CD4-positive, alpha-beta memory T cell (primary cell): ENCODE measurements at regions of chr1 and their contacts with region 1.

Region 1: GRCh38 chr1:24536391-24536840 is 19.5 kb upstream of the NCMAP start:
- DNase-seq: peak; percentile 83 to 93 (median 86)
- H3K4me3 ChIP-seq: peak overlapping the region in 1 of 2 donors; percentile 32
- H3K4me3 Mint-ChIP-seq: peak overlapping the region; percentile 76 to 92 (median 88)
- H3K27ac ChIP-seq: peak overlapping the region; percentile 88
- H3K27ac Mint-ChIP-seq: peak overlapping the region; percentile 98 to 100 (median 100)
- H3K4me1 ChIP-seq: peaks cover 83% of the 10 kb centered on the region
- H3K4me1 Mint-ChIP-seq: peaks cover 57 to 82% (median 68%) of the 10 kb centered on the region in 4 donors
- H3K27me3 ChIP-seq: no peaks in the 10 kb centered on the region
- H3K27me3 Mint-ChIP-seq: no peaks in the 10 kb centered on the region

Region 2: GRCh38 chr1:24186993-24187805 is 349.2 kb before region 1 on chr1 and contains the start of gene IFNLR1:
- CTCF ChIA-PET with region 1: no interaction called
- POLR2A ChIA-PET with region 1: no interaction called
- intact Hi-C with region 1: loop called (anchors 5 kb)
- DNase-seq: peak; percentile 42 to 75 (median 57)
- H3K4me3 ChIP-seq: peak within 1 kb of the TSS; percentile 11 to 60
- H3K4me3 Mint-ChIP-seq: peak within 1 kb of the TSS; percentile 86 to 92 (median 90)
- H3K27ac ChIP-seq: peak within 1 kb of the TSS; percentile 50
- H3K27ac Mint-ChIP-seq: peak within 1 kb of the TSS; percentile 53 to 93 (median 83)
- H3K4me1 ChIP-seq: peaks cover 27% of the 10 kb centered on the region
- H3K4me1 Mint-ChIP-seq: peaks cover 20 to 40% (median 34%) of the 10 kb centered on the region in 4 donors
- H3K27me3 ChIP-seq: no peaks in the 10 kb centered on the region
- H3K27me3 Mint-ChIP-seq: no peaks in the 10 kb centered on the region
- total RNA-seq, gene IFNLR1: 3.0 to 4.5 TPM

Region 3: GRCh38 chr1:24228311-24228710 is 308.1 kb before region 1 on chr1:
- CTCF ChIA-PET with region 1: no interaction called
- POLR2A ChIA-PET with region 1: no interaction called
- intact Hi-C with region 1: no loop called
- DNase-seq: no peak
- H3K4me3 ChIP-seq: no peak overlapping the region
- H3K4me3 Mint-ChIP-seq: peak overlapping the region in 4 of 8 donors; percentile 27 to 52 (median 40)
- H3K27ac ChIP-seq: no peak overlapping the region
- H3K27ac Mint-ChIP-seq: no peak overlapping the region
- H3K4me1 ChIP-seq: no peaks in the 10 kb centered on the region
- H3K4me1 Mint-ChIP-seq: peaks cover 0 to 5% (median under 1%) of the 10 kb centered on the region in 4 donors
- H3K27me3 ChIP-seq: no peaks in the 10 kb centered on the region
- H3K27me3 Mint-ChIP-seq: peaks cover 0 to 12% of the 10 kb centered on the region in 2 donors

Region 4: DNA sequence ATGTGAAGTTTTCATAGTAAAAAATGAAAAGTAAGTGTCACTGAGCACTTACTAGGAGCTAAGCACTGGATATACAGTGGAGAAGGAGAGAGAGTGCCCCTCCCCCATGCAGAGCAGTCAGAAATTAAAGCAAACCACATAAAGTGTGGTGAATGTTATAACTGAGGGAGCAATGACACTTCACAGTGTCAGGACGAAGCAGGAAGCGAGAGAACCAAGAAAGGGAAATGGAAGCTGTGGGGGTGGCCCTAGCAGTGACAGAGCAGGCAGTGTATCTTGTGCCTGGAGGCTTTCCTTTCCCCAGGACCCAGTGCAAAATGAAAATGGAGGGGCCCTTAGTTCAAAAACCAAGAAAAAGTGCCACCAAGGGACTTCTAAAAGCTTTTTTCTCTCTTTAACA is 55.3 kb before region 1 on chr1:
- CTCF ChIA-PET with region 1: interaction called, 5 read pairs
- POLR2A ChIA-PET with region 1: interaction called, 30 read pairs
- intact Hi-C with region 1: no loop called
- DNase-seq: peak; percentile 59 to 77 (median 67)
- H3K4me3 ChIP-seq: peak overlapping the region in 1 of 2 donors; percentile 50
- H3K4me3 Mint-ChIP-seq: peak overlapping the region; percentile 66 to 96 (median 86)
- H3K27ac ChIP-seq: peak overlapping the region; percentile 61
- H3K27ac Mint-ChIP-seq: peak overlapping the region; percentile 96 to 99 (median 99)
- H3K4me1 ChIP-seq: peaks cover 62% of the 10 kb centered on the region
- H3K4me1 Mint-ChIP-seq: peaks cover 42 to 72% (median 57%) of the 10 kb centered on the region in 4 donors
- H3K27me3 ChIP-seq: no peaks in the 10 kb centered on the region
- H3K27me3 Mint-ChIP-seq: no peaks in the 10 kb centered on the region

Region 5: DNA sequence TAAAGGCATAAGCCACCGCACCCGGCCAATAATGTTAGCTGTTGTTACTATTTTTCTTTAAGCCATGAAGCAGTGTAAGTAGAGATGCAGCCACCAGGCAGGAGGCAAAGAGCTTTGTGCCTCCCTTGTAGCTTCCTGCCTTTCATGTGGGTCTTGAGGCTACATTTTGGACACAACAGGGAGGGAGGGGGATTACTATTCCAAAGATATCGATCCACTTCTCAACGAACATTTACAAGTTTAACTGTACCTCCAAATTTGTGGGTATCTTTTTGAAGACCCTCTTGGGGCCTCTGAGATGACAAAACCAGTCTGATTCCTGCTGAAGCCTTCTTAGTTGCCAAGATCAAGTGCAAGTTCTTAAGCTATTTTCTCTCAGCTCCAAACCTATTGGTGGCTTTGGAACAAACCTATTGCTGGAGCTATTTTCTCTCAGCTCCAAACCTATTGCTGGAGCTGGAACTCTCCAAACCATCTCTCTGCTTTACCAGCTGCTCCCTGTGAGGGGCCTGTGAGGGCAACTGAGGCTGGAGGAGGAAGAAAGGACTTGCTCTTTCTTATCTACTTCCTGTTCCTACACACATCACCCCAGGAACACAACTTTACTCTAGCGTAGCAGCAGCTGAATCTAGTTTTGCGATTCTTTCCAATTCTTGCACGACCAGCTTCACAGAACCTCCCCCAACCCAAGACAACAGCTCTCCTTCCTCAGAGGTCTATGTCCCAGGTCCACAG is 49.9 kb before region 1 on chr1:
- CTCF ChIA-PET with region 1: interaction called, 5 read pairs
- POLR2A ChIA-PET with region 1: interaction called, 30 read pairs
- intact Hi-C with region 1: no loop called
- DNase-seq: peak; percentile 72 to 79 (median 75)
- H3K4me3 ChIP-seq: peak overlapping the region in 1 of 2 donors; percentile 21
- H3K4me3 Mint-ChIP-seq: peak overlapping the region; percentile 66 to 88 (median 82)
- H3K27ac ChIP-seq: peak overlapping the region; percentile 58
- H3K27ac Mint-ChIP-seq: peak overlapping the region; percentile 92 to 98 (median 93)
- H3K4me1 ChIP-seq: peaks cover 82% of the 10 kb centered on the region
- H3K4me1 Mint-ChIP-seq: peaks cover 50 to 82% (median 63%) of the 10 kb centered on the region in 4 donors
- H3K27me3 ChIP-seq: no peaks in the 10 kb centered on the region
- H3K27me3 Mint-ChIP-seq: no peaks in the 10 kb centered on the region

Region 6: DNA sequence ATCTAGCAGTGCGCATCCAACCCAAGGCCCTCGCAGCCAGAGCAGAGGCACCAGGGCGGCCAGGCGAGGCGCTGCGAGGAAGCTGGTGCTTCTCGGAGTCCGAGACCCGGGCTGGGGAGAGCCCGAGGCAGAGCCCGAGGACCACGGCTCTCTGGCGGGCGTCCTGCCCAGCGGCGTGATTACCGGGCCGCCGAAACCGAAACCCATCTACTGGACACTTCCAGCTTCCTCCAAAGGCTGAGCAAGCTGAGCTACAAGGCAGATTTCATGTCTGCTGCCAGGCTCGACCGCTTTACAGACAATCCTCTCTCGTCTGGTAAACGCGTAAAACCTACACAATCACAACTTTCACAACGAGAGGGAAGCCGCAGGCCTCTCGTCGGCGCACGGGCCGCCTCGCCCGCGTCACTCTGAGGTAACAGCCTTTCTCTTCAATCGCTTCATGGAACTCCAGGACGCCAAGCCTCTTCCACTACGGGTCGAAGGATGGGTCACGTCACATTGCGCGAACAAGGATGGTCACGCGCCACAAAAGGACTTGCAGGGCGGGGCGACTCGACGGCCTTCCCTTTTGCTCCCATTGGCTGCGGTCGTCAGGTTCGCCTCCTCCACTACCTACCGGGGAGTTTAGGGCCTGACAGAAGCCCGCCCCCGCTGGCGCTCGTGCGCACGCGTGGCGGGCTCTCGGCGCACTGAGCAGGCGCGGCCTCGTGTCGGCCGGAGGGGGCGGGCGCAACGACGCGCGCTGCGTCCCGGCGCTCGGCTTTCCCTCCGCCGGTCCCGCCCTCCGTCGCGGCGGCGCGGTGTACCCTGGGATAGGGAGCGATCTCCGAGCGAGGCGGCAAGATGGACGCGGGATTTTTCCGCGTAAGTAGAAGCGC is 106.3 kb after region 1 on chr1 and contains the start of gene SRRM1:
- CTCF ChIA-PET with region 1: no interaction called
- POLR2A ChIA-PET with region 1: interaction called, 3 read pairs
- intact Hi-C with region 1: loop called (anchors 2 kb)
- DNase-seq: peak; percentile 98 to 100 (median 100)
- H3K4me3 ChIP-seq: peak within 1 kb of the TSS; percentile 47 to 98
- H3K4me3 Mint-ChIP-seq: peak within 1 kb of the TSS; percentile 94 to 98 (median 96)
- H3K27ac ChIP-seq: peak within 1 kb of the TSS; percentile 99
- H3K27ac Mint-ChIP-seq: peak within 1 kb of the TSS; percentile 97 to 100 (median 100)
- H3K4me1 ChIP-seq: peaks cover 32% of the 10 kb centered on the region
- H3K4me1 Mint-ChIP-seq: peaks cover 15 to 61% (median 42%) of the 10 kb centered on the region in 4 donors
- H3K27me3 ChIP-seq: no peaks in the 10 kb centered on the region
- H3K27me3 Mint-ChIP-seq: no peaks in the 10 kb centered on the region
- total RNA-seq, gene SRRM1: 209 to 230 TPM